ENCODE measurements at regions of chr15 and their contacts with region 1.

Region 1: GRCh38 chr15:94582369-94582768 is 351.0 kb downstream of the MCTP2 start:
- DNase-seq: peak; percentile 85
- H3K4me3 ChIP-seq: no peak overlapping the region
- H3K27ac ChIP-seq: no peak overlapping the region
- H3K4me1 ChIP-seq: peaks cover 25% of the 10 kb centered on the region
- H3K27me3 ChIP-seq: no peaks in the 10 kb centered on the region
- CTCF ChIP-seq: peak; percentile 75 to 80
- POLR2A ChIP-seq: no peak

Region 2: GRCh38 chr15:94485148-94485719 is 97.1 kb before region 1 on chr15:
- CTCF ChIA-PET with region 1: no interaction called
- POLR2A ChIA-PET with region 1: no interaction called
- dilution Hi-C with region 1: no loop called
- intact Hi-C with region 1: no loop called
- DNase-seq: no peak
- H3K4me3 ChIP-seq: no peak overlapping the region
- H3K27ac ChIP-seq: no peak overlapping the region
- H3K4me1 ChIP-seq: no peaks in the 10 kb centered on the region
- H3K27me3 ChIP-seq: no peaks in the 10 kb centered on the region
- CTCF ChIP-seq: no peak
- POLR2A ChIP-seq: no peak

Region 3: DNA sequence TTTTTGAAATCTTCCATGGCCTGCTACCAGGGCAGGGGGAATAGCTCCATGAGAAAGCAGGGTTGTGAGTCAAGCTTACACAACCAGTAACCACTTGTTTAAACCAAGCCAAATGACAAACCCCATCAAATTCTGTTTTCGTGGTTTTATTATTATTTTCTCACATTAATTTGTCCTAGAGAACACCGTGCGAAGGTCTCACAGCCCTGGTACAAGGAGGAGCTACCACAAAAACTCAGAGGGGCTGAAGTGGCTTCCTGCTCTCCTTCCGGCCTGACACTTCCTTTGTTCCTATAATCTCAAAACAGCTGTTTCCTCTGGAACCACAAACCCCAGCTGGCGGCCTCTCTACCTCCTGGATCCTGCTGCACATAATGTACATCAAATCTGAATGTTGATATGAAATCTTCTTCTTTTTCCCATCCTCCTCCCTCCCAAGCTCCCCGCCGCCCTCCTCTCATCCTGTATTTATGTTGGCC is 24.8 kb after region 1 on chr15:
- CTCF ChIA-PET with region 1: interaction called, 51 read pairs
- POLR2A ChIA-PET with region 1: interaction called, 7 read pairs
- dilution Hi-C with region 1: no loop called
- intact Hi-C with region 1: loop called (anchors 1 kb)
- DNase-seq: peak; percentile 96
- H3K4me3 ChIP-seq: no peak overlapping the region
- H3K27ac ChIP-seq: peak overlapping the region; percentile 97
- H3K4me1 ChIP-seq: peaks cover 40% of the 10 kb centered on the region
- H3K27me3 ChIP-seq: no peaks in the 10 kb centered on the region
- CTCF ChIP-seq: no peak
- POLR2A ChIP-seq: peak; percentile 75

Region 4: DNA sequence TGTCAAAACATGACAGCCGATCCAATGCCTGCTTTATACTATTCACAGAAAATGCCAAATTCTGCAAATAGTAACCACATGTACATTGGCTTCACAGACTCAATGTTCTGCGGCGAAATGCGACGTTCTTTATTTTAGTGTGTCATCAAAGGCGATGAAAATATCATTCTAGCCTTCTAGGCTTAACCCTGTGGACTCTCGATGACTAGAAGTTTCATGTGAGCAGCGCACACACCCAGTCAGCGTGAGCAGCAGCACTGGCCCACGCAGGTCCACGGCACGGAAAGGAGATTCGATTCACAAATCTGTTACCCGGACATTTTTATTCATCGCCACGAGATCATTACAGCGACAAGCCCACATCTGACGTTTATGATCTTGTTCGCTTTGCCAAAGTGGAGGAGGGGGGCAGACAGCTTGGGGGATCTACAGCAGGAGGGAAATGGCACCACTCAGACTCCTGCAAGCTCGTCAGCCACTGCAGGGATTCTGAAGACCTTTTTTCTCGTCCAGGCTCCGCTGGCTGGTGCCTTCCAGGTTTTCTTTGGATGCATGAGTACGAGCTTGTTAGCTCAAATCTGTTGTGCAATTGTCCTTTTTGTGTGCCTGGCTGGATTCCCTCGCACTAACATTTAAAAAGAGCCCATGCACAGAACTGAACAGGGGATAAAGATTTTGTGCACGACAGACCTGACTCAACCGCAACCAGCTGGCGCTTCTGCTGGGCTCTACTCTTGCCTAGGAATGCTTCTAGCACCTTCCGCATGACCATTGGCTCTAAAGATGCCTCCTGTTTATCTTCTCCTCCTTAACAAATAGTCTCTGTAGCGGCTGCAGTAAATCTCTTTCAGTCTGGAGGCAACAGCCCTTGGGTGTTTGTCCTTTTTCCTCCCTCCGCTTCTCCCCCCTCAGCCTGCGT is 587.4 kb after region 1 on chr15:
- CTCF ChIA-PET with region 1: no interaction called
- POLR2A ChIA-PET with region 1: no interaction called
- dilution Hi-C with region 1: no loop called
- intact Hi-C with region 1: loop called (anchors 2 kb)
- DNase-seq: no peak
- H3K4me3 ChIP-seq: no peak overlapping the region
- H3K27ac ChIP-seq: no peak overlapping the region
- H3K4me1 ChIP-seq: peaks cover 7% of the 10 kb centered on the region
- H3K27me3 ChIP-seq: no peaks in the 10 kb centered on the region
- CTCF ChIP-seq: no peak
- POLR2A ChIP-seq: no peak

Region 5: DNA sequence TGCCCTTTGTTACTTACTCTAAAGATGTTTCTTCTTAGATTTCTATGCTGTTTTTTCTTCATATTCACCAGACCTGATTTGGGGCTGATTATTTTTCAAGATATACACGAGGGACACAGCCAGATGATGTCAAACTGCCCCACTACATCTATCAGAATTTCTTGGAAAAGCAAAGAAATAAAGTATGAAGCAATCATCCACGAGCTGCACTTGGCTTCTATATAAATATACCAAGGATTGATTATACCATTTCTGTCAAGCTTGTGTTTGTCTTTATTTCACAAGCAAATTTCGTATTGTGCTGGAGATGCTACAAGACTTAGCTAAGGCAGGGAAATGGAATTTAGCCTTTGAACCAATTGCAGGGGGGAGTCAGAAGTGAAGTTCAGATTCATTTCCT is 1033.1 kb after region 1 on chr15:
- CTCF ChIA-PET with region 1: no interaction called
- POLR2A ChIA-PET with region 1: no interaction called
- dilution Hi-C with region 1: no loop called
- intact Hi-C with region 1: loop called (anchors 10 kb)
- DNase-seq: no peak
- H3K4me3 ChIP-seq: no peak overlapping the region
- H3K27ac ChIP-seq: no peak overlapping the region
- H3K4me1 ChIP-seq: no peaks in the 10 kb centered on the region
- H3K27me3 ChIP-seq: no peaks in the 10 kb centered on the region
- CTCF ChIP-seq: no peak
- POLR2A ChIP-seq: no peak

Region 6: DNA sequence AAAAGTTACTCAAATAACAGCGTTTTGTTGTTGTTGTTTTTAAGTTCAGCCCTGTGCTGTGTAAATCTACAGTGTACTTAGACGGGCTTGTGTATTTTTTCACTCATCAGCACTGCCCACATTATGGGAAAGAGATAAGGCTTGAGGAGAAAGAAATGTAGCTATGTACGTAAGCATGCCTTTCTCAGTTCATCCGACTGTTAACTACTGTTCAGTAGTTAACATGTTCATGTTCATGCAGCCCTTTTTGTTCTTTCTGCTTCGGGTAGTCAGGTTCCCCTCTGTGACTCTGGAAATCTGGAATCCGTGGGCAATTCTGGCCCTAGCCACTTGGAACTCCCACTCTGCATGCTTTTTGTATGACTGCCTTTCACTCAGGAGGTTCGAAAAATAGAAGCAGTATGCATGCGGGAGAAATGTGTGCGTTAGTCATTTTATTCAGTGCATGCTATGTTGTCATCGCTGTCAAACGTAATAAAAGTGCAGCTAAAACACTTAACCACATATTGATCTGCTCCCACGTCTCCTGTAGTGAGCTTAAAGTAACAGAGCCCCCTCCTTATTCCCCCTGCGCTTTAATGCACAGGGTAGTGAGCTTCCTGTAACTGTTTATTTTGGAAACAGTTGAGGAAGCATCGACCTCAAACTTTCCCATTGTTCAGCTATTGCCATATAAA is 1465.0 kb after region 1 on chr15:
- CTCF ChIA-PET with region 1: no interaction called
- POLR2A ChIA-PET with region 1: no interaction called
- dilution Hi-C with region 1: no loop called
- intact Hi-C with region 1: loop called (anchors 10 kb)
- DNase-seq: peak; percentile 83
- H3K4me3 ChIP-seq: peak overlapping the region in 1 of 3 experiments; percentile 13
- H3K27ac ChIP-seq: no peak overlapping the region
- H3K4me1 ChIP-seq: peaks cover 14% of the 10 kb centered on the region
- H3K27me3 ChIP-seq: peaks cover 0 to 1% of the 10 kb centered on the region in 2 experiments
- CTCF ChIP-seq: no peak
- POLR2A ChIP-seq: no peak